ENCODE measurements at regions of chr20 and their contacts with region 1.

Region 1: DNA sequence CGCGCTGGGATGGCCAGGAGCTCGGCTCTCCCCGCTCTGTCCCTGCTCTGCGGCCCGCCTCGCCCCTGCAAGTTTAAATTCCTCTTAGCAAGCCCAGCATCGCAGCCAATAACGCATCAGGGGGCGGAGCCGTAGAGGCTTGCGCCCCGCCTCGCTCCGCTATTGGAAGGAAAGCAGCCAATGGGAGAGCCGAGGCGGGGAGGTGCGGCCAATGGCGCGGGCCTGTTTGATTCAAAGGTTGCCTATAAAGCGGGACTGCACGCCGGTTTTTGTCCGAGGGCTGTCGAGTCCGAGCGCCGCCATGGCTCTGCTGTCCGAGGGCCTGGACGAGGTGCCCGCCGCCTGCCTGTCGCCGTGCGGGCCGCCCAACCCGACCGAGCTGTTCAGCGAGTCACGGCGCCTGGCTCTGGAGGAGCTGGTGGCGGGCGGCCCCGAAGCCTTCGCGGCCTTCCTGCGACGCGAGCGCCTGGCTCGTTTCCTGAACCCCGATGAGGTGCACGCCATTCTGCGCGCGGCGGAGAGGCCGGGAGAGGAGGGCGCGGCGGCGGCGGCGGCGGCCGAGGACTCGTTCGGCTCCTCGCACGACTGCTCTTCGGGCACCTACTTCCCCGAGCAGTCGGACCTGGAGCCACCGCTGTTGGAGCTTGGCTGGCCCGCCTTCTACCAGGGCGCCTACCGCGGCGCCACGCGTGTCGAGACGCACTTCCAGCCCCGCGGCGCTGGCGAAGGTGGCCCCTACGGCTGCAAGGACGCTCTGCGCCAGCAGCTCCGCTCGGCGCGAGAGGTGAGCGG is at the start of gene FAM83D:
- DNase-seq: peak; percentile 99
- ATAC-seq: peak; percentile 93 to 96
- H3K4me3 ChIP-seq: peak within 1 kb of the TSS; percentile 94
- H3K27ac ChIP-seq: peak within 1 kb of the TSS; percentile 80 to 93
- H3K4me1 ChIP-seq: peaks cover 26% of the 10 kb centered on the region; the same call in 2 of the 3 replicates
- CTCF ChIP-seq: no peak; the same call in 2 of the 3 replicates
- EP300 ChIP-seq: no peak
- POLR2A ChIP-seq: peak; percentile 98
- RAD21 ChIP-seq: peak; percentile 58 to 71; a peak in 4 of 5 replicates
- polyA plus RNA-seq, gene FAM83D: 53.5 and 57.1 TPM in 2 replicates

Region 2: DNA sequence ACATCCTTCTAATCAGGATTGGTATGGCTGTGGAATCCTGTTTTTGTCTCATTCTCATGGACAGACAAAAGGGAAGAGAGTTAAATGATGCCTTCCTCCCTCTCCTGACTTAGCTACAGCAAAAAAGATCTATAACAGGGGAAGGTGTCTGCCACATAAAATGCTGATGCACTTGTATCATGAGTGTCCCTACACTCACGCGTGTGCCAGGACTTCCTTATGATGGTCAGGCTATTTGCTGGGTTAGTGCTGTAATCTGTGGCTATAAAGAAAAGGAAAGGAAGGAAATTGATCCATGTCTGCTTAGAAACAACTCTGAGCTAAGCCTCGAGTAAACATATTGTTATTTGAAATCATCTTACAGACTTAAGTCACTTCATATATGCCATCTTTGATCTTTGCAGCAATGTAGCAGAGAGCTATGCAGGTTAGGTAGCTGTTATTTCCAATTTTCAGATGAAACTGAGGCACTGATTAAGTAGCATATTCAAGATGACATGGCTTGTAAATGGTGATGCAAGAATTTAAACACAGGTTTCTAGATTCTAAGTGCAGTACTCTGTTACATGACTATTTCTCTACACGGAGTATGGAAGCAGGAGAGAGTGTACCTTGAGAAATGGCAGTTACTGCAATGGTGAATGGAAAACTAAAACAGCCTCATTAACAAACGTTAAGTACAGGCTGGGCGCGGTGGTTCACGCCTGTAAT is 27.4 kb after region 1 on chr20:
- CTCF ChIA-PET with region 1: interaction called, 13 read pairs
- POLR2A ChIA-PET with region 1: no interaction called
- DNase-seq: no peak
- ATAC-seq: no peak
- H3K4me3 ChIP-seq: no peak overlapping the region
- H3K27ac ChIP-seq: no peak overlapping the region
- H3K4me1 ChIP-seq: no peaks in the 10 kb centered on the region
- CTCF ChIP-seq: no peak
- EP300 ChIP-seq: no peak
- POLR2A ChIP-seq: no peak
- RAD21 ChIP-seq: no peak

Region 3: GRCh38 chr20:38962044-38962927 is 35.9 kb after region 1 on chr20 and contains the start of gene DHX35:
- CTCF ChIA-PET with region 1: interaction called, 10 read pairs
- POLR2A ChIA-PET with region 1: interaction called, 34 read pairs
- DNase-seq: peak; percentile 91 to 97
- ATAC-seq: peak; percentile 98 to 99
- H3K4me3 ChIP-seq: peak within 1 kb of the TSS; percentile 95
- H3K27ac ChIP-seq: peak within 1 kb of the TSS; percentile 95 to 98
- H3K4me1 ChIP-seq: peaks cover 15% of the 10 kb centered on the region; the same call in 2 of the 3 replicates
- CTCF ChIP-seq: peak; percentile 31; the same call in 2 of the 3 replicates
- EP300 ChIP-seq: no peak
- POLR2A ChIP-seq: peak; percentile 30
- RAD21 ChIP-seq: peak; percentile 17 to 19; a peak in 1 of 5 replicates
- polyA plus RNA-seq, gene DHX35: 13.8 and 14.4 TPM in 2 replicates

Region 4: GRCh38 chr20:38985603-38986170 is 59.3 kb after region 1 on chr20:
- CTCF ChIA-PET with region 1: no interaction called
- POLR2A ChIA-PET with region 1: no interaction called
- DNase-seq: no peak
- ATAC-seq: no peak
- H3K4me3 ChIP-seq: no peak overlapping the region
- H3K27ac ChIP-seq: no peak overlapping the region; a peak in 1 of 6 replicates
- H3K4me1 ChIP-seq: peaks cover 10% of the 10 kb centered on the region; the same call in 2 of the 3 replicates
- CTCF ChIP-seq: no peak
- EP300 ChIP-seq: no peak
- POLR2A ChIP-seq: no peak
- RAD21 ChIP-seq: no peak